Adrenal gland (tissue), 19 donors: ENCODE measurements at regions of chr6 and their contacts with region 1.

Region 1: DNA sequence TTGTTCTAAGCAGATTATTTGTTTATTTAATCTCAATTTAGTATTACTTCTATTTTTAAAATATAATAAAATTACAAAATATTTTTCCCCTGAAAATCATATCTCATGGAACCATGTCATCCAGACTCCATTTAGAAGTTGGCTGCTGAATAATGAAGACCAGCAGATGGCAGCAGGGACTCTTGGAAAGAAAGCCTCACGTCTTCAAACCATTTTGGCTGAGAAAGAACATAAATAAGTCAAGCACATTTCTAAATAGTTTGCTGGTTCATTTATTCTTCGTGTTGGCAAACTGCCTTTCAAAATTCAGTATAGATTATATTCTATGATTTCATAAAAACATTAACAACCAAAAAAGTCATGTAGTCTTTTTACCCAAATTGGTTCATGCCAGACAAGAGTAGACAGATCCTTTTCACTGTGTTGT is 71.7 kb downstream of the RCAN2 start:
- DNase-seq: peak; percentile 53 to 89 (median 61)
- H3K4me3 ChIP-seq: no peak overlapping the region
- H3K27ac ChIP-seq: no peak overlapping the region
- H3K4me1 ChIP-seq: peaks cover 0 to 6% of the 10 kb centered on the region in 2 donors
- H3K27me3 ChIP-seq: no peaks in the 10 kb centered on the region
- CTCF ChIP-seq: peak; percentile 65 to 89 (median 78)
- POLR2A ChIP-seq: no peak

Region 2: DNA sequence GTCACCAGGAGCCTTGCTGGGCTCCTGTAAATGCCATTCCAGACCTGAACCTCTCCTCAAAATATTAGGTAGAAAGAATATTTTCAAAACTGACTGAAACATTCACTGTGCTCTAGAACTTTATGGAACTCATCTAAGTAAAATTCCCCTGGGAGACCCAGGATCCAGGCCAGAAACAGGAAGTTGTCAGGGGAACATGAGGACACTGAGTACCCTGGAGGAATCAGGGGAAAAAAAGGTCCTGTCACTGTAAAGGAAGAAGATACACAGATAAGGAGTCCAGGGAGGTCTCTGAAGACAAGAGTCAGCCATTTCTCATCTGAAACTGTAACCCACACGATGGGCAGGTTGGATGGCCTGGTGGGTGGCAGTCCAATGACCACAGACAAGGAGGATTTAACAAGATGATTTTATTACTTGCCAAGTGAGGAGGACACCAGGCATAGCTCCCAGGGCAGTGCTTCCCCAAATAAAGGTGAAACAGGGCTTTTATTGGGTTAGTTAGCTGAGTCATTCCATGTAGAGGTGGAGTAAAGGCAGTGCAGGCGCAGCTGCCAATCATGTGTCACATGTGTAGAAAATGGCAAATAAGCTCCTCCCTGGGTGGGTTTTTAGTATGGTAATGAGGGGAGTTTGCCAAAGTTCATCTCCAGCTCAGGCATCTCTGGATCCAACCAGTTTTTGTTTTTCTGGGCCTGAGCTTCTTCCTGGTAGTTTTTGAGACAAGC is 66.9 kb before region 1 on chr6:
- intact Hi-C with region 1: no loop called
- DNase-seq: peak in 4 of 7 donors; percentile 13 to 60 (median 20)
- H3K4me3 ChIP-seq: no peak overlapping the region
- H3K27ac ChIP-seq: peak overlapping the region in 2 of 5 donors; percentile 15 to 67
- H3K4me1 ChIP-seq: peaks cover 0 to 16% of the 10 kb centered on the region in 2 donors
- H3K27me3 ChIP-seq: no peaks in the 10 kb centered on the region
- CTCF ChIP-seq: no peak
- POLR2A ChIP-seq: no peak

Region 3: GRCh38 chr6:46465294-46466165 is 45.9 kb after region 1 on chr6:
- intact Hi-C with region 1: no loop called
- DNase-seq: no peak
- H3K4me3 ChIP-seq: no peak overlapping the region
- H3K27ac ChIP-seq: no peak overlapping the region
- H3K4me1 ChIP-seq: no peaks in the 10 kb centered on the region
- H3K27me3 ChIP-seq: no peaks in the 10 kb centered on the region
- CTCF ChIP-seq: no peak
- POLR2A ChIP-seq: no peak

Region 4: GRCh38 chr6:46555129-46555528 is 135.5 kb after region 1 on chr6:
- intact Hi-C with region 1: no loop called
- DNase-seq: no peak
- H3K4me3 ChIP-seq: no peak overlapping the region
- H3K27ac ChIP-seq: no peak overlapping the region
- H3K4me1 ChIP-seq: no peaks in the 10 kb centered on the region
- H3K27me3 ChIP-seq: no peaks in the 10 kb centered on the region
- CTCF ChIP-seq: no peak
- POLR2A ChIP-seq: no peak

Region 5: DNA sequence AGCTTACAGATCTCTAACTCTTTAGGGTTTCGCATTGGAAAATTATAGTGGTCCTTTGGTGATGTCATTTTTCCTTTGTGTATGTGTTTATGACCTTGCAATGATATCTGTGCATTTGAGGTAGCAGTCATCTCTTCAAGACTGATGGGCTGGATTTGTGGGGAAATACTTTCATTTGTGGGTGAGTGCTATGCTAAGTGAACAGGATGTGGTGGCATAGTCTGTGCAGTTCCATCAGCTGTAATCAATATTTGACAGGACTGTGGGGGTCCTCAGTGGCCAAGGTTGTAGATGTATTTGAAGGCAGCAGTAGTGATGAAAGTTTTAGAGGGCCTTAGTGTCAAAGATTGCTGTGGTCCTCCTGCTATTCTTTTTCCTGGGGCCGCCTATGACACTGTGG is 153.6 kb after region 1 on chr6:
- intact Hi-C with region 1: no loop called
- DNase-seq: no peak
- H3K4me3 ChIP-seq: no peak overlapping the region
- H3K27ac ChIP-seq: no peak overlapping the region
- H3K4me1 ChIP-seq: no peaks in the 10 kb centered on the region
- H3K27me3 ChIP-seq: no peaks in the 10 kb centered on the region
- CTCF ChIP-seq: no peak
- POLR2A ChIP-seq: no peak

Region 6: DNA sequence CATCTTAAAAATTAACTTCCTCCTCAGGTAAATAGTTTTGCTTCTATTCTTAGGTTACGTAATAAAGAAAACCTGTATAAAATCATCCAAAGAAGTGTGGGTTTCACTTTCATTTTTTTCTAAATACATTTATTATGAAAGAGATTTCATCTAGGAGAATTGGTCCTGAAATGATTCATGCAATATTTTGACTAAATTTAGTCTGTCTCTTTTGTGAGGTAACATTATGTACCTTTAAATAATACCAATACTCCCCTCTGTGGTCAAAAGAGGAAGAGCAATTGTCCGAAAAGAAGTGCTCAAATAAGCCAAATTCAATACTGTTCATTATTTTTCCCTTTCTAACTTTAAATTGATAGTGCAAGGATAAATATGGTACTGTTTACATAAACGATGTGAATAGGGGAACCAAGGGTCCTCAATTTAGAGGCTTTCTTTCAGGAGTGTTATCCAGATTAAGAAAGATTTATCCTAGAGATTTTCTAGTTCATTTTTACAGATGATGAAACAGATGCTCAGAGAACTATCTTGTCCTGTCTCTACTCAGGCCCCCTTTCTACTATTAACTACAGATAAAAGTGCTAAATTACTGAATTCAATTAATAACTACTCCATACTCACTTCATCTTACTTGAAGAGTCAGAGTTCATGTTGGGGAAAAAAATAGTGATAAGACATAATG is 206.8 kb after region 1 on chr6:
- intact Hi-C with region 1: loop called (anchors 2 to 5 kb)
- DNase-seq: no peak
- H3K4me3 ChIP-seq: no peak overlapping the region
- H3K27ac ChIP-seq: no peak overlapping the region
- H3K4me1 ChIP-seq: no peaks in the 10 kb centered on the region
- H3K27me3 ChIP-seq: no peaks in the 10 kb centered on the region
- CTCF ChIP-seq: peak; percentile 51 to 82 (median 69)
- POLR2A ChIP-seq: no peak

Region 7: DNA sequence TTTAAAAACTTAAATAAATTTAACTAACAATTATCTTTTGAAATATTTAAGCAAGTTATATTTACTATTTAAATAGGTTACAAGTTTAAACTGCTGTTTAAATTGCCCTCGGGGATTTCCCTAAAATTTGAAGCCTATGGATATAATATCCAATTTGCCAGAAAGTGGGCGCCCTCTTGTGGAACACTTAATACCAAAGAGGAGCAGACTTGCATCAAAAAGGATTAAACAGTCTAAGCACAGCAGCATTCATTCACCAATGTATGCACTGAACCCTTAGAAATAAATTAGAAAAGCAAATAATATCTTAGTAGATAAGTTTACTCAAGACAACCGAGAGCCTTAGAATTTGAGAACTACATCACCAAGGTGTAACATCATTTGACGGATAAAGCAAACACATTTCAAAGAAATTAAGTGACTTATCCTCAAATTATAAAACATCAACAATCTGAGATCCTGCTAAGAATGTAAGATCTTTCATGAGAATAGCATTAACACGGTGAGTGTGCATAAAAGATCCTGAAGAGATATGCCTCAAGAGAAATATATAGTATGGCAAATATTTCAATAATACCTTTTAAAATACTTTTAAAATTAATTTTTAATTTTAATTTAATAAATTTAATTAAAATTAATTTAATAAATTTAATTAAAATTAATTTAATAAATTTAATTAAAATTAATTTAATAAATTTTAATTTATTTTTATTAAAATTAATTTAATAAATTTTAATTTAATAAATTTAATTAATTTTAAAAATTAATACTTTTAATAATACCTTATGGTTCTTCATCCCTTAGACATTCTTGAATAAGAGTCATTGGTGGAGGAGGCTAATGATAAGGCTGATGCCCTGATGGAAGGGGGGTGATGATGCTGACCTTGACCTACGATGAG is 362.1 kb after region 1 on chr6:
- intact Hi-C with region 1: loop called in 1 of 2 experiments (anchors 5 kb)
- DNase-seq: peak; percentile 26 to 75 (median 52)
- H3K4me3 ChIP-seq: no peak overlapping the region
- H3K27ac ChIP-seq: no peak overlapping the region
- H3K4me1 ChIP-seq: no peaks in the 10 kb centered on the region
- H3K27me3 ChIP-seq: no peaks in the 10 kb centered on the region
- CTCF ChIP-seq: peak; percentile 52 to 78 (median 56)
- POLR2A ChIP-seq: no peak